Activated CD4-positive, alpha-beta T cell treated with anti-CD3 and anti-CD28 coated beads, Interleukin-2, amount 10 ng/mL, durations not matched to agents 24 days and 14 days (primary cell): ENCODE measurements at regions of chr15 and their contacts with region 1.

Region 1: GRCh38 chr15:68559345-68560310 is 19.2 kb upstream of the CORO2B start:
- DNase-seq: peak; percentile 93
- H3K4me3 Mint-ChIP-seq: peak overlapping the region; percentile 77
- H3K27ac Mint-ChIP-seq: no peak overlapping the region
- H3K4me1 Mint-ChIP-seq: peaks cover 18% of the 10 kb centered on the region
- H3K27me3 Mint-ChIP-seq: peaks cover 47% of the 10 kb centered on the region

Region 2: GRCh38 chr15:68614286-68615035 is 54.8 kb after region 1 on chr15:
- intact Hi-C with region 1: loop called (anchors 10 kb)
- DNase-seq: no peak
- H3K4me3 Mint-ChIP-seq: no peak overlapping the region
- H3K27ac Mint-ChIP-seq: no peak overlapping the region
- H3K4me1 Mint-ChIP-seq: no peaks in the 10 kb centered on the region
- H3K27me3 Mint-ChIP-seq: peaks cover 11% of the 10 kb centered on the region

Region 3: DNA sequence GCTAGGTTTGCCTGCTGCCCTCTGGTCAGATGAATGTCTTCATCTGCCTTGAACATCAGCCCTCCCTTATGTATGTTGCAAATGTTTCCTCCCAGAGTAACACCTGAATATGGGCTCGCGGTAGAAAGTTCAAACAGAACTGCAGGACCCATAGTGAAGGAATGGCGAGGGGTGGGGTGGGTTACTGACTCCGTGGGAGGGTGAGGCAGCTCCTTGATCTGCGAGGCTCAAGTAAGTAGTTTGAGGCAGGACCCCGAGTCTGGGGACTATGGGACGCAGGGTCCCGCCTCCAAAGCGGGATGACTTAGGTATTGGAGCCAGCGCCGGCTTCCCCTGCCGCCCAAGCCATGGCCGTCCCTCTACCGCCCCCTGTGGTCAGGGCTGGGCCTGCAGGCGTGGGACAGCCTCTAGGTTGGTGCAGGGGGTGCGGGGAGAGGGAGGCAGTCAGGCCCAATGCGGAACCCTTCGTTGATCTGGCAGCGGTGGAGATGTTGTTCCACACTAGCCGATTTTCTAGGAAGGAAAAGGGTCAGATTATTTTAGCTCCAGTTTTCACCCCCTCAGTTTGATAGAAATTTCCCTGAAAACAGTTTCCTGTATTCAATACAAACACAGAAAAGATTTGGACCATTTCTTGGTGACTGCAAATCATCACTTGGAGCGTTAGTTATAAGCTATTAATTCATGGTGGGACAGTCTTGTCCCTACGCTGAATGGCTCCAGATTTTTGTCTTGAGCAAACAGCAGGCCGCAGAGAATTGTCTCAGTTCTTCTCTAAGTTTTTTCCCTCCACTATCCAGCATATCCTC is 91.5 kb after region 1 on chr15:
- intact Hi-C with region 1: loop called (anchors 2 kb)
- DNase-seq: peak; percentile 85
- H3K4me3 Mint-ChIP-seq: no peak overlapping the region
- H3K27ac Mint-ChIP-seq: no peak overlapping the region
- H3K4me1 Mint-ChIP-seq: no peaks in the 10 kb centered on the region
- H3K27me3 Mint-ChIP-seq: no peaks in the 10 kb centered on the region

Region 4: DNA sequence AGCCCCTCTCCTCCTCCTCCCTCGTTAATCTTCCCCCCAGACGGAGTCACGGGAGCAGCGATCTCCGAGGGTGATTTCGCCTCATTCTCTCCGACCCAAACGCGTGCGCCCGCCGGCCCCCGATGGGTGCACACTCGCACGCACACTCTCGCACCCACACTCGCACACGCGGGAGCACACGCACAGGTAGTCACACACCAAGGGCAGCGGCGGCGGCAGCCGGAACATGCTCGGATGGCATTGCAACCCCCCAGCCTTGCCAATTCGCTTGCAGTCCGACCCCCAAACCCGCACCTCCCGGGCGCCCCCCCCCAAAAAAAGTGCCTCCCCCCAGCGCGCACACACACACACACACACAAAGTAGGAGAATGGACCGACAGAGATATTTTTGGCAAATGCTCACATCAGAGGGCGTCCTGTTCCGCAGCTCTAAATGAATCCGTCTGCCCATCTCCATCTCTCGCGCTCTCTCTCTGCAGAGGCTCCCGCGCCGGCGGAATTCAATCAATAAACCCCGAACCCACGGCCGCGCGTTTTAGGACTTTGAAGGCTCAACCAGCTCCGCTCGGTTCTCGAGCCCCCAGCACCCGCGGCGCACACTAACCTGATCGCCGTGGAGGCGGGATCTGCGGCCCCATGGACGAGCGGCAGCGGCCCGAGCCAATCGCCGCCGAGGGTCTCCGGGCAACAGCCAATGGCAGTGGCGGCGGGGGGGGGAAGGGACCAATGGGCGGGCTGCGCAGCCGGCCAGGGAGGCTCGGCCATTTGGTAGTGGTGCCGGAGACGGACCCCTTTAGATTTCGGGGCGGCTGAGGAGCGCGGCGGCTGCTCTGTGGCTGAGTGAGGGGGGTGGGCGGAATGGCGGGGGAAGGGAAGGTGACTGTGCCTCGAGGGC is 260.9 kb after region 1 on chr15 and contains the start of gene ANP32A:
- intact Hi-C with region 1: loop called (anchors 10 kb)
- DNase-seq: peak; percentile 99
- H3K4me3 Mint-ChIP-seq: peak within 1 kb of the TSS; percentile 93
- H3K27ac Mint-ChIP-seq: peak within 1 kb of the TSS; percentile 96
- H3K4me1 Mint-ChIP-seq: peaks cover 30% of the 10 kb centered on the region
- H3K27me3 Mint-ChIP-seq: no peaks in the 10 kb centered on the region
- total RNA-seq, gene ANP32A: 280 and 302 TPM in 2 replicates